ENCODE measurements at regions of chr15 and their contacts with region 1.

Region 1: GRCh38 chr15:33616475-33616874 is 305.7 kb downstream of the RYR3 start:
- DNase-seq: peak; percentile 70
- H3K4me3 ChIP-seq: no peak overlapping the region
- H3K27ac ChIP-seq: no peak overlapping the region
- H3K4me1 ChIP-seq: peaks cover 10% of the 10 kb centered on the region
- CTCF ChIP-seq: no peak

Region 2: GRCh38 chr15:33644319-33644718 is 27.8 kb after region 1 on chr15:
- CTCF ChIA-PET with region 1: no interaction called
- POLR2A ChIA-PET with region 1: interaction called, 5 read pairs
- intact Hi-C with region 1: loop called (anchors 2 kb)
- DNase-seq: no peak
- H3K4me3 ChIP-seq: no peak overlapping the region
- H3K27ac ChIP-seq: no peak overlapping the region
- H3K4me1 ChIP-seq: no peaks in the 10 kb centered on the region
- CTCF ChIP-seq: no peak